Sigmoid colon (tissue), 7 donors: ENCODE measurements at regions of chr3 and their contacts with region 1.

Region 1: DNA sequence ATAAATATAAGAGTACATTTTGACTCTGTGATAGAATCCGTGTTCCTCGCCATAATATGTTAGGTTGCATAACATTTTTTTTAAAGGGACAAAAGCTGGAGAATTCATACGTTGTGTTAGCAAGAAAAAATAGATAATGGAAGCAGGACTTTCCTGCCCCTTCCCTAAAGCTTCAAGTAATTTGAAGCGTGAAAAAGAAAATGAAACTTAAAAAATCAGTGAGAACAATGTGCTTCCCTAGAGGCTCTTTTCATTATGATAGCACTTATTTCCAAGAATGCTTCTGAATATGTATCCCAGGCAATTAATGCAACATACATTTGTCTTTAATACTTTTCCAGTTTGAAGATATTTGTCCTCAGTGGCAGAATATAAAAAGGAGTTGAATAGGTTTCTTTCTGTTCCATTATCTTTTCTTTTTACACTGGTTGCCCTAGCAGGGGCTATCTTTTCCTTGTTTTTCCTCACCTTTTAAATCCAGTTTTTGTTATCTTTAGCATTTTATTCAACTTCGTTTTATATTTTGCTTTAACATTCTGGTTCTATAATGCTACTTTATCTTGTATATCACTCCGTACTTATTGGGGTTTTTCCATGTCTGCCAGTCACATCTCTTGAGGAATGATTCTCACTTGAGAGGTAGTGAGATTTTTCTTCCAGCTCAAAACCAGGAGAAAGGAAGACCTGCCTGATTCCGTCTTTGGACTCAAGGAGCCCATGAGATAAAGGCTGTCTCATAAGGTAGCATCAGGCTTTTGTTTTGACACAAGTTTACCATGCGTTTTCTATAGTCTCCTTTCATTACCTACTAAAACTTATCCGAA is 113.8 kb downstream of the MBNL1 start:
- DNase-seq: no peak
- H3K4me3 ChIP-seq: peak overlapping the region; percentile 8 to 36 (median 21)
- H3K27ac ChIP-seq: peak overlapping the region; percentile 73 to 79 (median 77)
- H3K4me1 ChIP-seq: peaks cover 0 to 89% (median 77%) of the 10 kb centered on the region in 4 donors
- H3K27me3 ChIP-seq: no peaks in the 10 kb centered on the region
- CTCF ChIP-seq: no peak
- EP300 ChIP-seq: no peak
- POLR2A ChIP-seq: no peak

Region 2: GRCh38 chr3:152309535-152310307 is 72.8 kb before region 1 on chr3:
- intact Hi-C with region 1: loop called (anchors 5 kb)
- DNase-seq: no peak
- H3K4me3 ChIP-seq: peak overlapping the region in 2 of 4 donors; percentile 11 to 27
- H3K27ac ChIP-seq: peak overlapping the region; percentile 82 to 90 (median 84)
- H3K4me1 ChIP-seq: peaks cover 0 to 90% (median 77%) of the 10 kb centered on the region in 4 donors
- H3K27me3 ChIP-seq: no peaks in the 10 kb centered on the region
- CTCF ChIP-seq: no peak
- EP300 ChIP-seq: peak in 1 of 4 donors; percentile 17
- POLR2A ChIP-seq: no peak

Region 3: DNA sequence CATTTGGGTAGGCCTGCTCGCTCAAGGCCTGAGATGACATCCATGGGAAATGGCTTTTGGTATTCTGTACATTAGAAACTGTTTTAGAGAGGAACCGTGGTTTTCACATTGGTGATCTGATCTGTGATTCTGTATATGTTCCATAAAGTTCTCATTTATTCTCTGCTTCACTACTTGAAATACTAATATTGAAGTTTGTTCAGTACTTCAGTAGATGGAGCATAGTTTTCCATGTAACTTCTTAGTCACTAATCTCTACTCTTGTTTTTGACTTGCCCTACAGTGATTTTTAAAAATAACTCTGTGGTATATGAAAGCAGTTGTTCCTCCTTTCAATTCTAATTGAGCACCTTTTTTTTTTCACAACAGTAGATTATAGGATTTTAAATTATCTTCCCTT is 47.3 kb before region 1 on chr3:
- intact Hi-C with region 1: no loop called
- DNase-seq: no peak
- H3K4me3 ChIP-seq: no peak overlapping the region
- H3K27ac ChIP-seq: peak overlapping the region in 3 of 4 donors; percentile 24 to 78 (median 73)
- H3K4me1 ChIP-seq: peaks cover 0 to 90% (median 62%) of the 10 kb centered on the region in 4 donors
- H3K27me3 ChIP-seq: no peaks in the 10 kb centered on the region
- CTCF ChIP-seq: no peak
- EP300 ChIP-seq: no peak
- POLR2A ChIP-seq: no peak

Region 4: GRCh38 chr3:152505926-152506325 is 123.4 kb after region 1 on chr3:
- intact Hi-C with region 1: no loop called
- DNase-seq: no peak
- H3K4me3 ChIP-seq: no peak overlapping the region
- H3K27ac ChIP-seq: no peak overlapping the region
- H3K4me1 ChIP-seq: no peaks in the 10 kb centered on the region
- H3K27me3 ChIP-seq: no peaks in the 10 kb centered on the region
- CTCF ChIP-seq: no peak
- EP300 ChIP-seq: no peak
- POLR2A ChIP-seq: no peak